Left cardiac atrium (tissue), 4 donors: ENCODE measurements at regions of chr11 and their contacts with region 1.

Region 1: GRCh38 chr11:2885676-2886081 is at the start of gene CDKN1C:
- DNase-seq: peak; percentile 86
- ATAC-seq: peak; percentile 82 to 85
- total RNA-seq, gene CDKN1C: 23.3 to 44.2 TPM

Region 2: DNA sequence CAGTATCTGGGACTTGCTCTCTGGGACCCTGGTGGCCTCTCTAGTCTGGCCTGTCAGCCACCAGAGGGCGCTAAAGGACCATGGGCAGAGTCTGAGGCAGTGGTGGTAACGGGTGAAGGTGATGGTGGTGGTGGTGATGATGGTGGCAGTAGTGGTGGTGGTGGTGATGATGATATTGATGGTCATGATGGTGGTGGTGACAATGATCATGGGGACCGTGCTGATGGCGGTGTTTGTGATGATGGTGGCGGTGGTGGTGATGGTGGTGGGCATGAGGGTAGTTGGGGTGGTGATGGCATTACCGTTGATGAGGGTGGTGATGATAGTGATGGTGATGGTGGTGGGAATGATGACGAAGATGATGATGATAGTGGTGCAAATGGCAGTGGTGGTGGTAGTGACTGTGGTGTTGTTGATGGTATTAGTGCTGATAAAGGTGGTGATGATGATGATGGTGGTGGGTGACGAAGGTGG is 457.3 kb before region 1 on chr11:
- intact Hi-C with region 1: loop called (anchors 2 kb)
- DNase-seq: peak; percentile 76
- ATAC-seq: peak; percentile 77 to 90

Region 3: GRCh38 chr11:2532704-2533586 is 352.7 kb before region 1 on chr11:
- intact Hi-C with region 1: loop called (anchors 1 to 2 kb)
- DNase-seq: peak; percentile 92
- ATAC-seq: peak; percentile 88 to 89

Region 4: DNA sequence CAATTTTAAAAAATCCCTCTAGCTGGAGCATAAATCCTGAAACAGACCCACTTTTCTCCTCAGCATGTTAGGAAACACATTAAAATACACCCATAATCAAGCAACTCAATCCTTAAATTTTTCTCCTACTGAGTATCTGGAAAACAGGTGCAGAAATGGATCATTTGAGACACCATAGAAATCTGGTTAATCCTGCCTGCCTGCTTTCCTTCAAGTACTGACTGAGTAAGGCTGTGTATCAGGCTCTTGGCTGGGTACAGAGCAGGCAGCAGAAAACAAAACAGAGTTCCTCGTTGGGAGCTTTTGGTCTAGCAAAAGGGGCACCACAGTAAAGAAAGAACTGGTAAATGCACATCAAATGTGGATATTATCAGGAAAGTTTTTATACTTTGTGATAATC is 187.8 kb before region 1 on chr11:
- intact Hi-C with region 1: loop called in 1 of 2 experiments (anchors 2 kb)
- DNase-seq: peak; percentile 3
- ATAC-seq: no peak

Region 5: GRCh38 chr11:2750682-2751387 is 134.8 kb before region 1 on chr11:
- intact Hi-C with region 1: no loop called
- DNase-seq: no peak
- ATAC-seq: no peak

Region 6: GRCh38 chr11:2780259-2781058 is 105.2 kb before region 1 on chr11:
- intact Hi-C with region 1: loop called in 1 of 2 experiments (anchors 10 kb)
- DNase-seq: peak; percentile 37
- ATAC-seq: no peak

Region 7: GRCh38 chr11:2834503-2835273 is 51.0 kb before region 1 on chr11:
- intact Hi-C with region 1: loop called in 1 of 2 experiments (anchors 5 kb)
- DNase-seq: no peak
- ATAC-seq: no peak

Region 8: DNA sequence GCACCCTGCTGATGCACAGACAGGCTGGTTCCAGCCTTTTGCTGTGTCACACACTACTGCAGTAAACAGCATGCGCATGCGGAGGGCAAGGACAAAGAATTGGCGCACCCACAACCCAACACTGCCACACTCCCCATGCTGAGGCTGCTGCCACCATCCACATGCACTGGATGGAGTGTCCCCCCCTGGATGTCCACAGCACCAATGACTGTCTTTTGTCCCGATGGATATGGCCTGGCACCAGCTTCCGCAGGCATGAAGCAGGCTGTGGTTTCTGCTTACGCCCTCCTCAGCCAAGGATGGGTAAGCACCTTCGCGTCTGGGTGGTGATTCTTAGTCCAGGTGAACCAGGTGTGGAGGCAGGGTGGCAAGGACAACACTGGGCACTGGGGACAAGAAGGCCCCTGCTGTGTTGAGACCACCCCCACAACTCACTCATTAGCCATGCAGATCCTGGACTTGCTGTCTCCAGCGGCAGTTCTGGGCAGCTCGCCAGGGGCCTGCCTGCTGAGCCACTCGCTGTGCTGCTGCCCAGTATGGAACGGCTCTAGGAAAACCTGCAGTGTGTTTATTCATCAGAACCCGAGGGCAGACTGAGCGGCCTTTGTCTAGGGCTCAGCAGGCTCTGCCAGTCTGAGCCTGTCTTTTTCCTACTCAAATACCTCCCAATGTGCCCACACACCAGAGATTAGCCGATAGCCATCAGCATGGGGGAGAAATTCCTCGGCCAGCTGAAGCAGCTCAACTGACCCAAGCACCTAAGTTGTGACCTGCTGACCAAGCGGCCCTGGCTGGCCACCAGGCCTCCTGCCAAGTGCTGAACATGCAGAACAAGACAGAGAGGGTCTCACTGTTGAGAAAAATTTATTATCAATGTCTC is 114.6 kb after region 1 on chr11:
- intact Hi-C with region 1: no loop called
- DNase-seq: peak; percentile 76
- ATAC-seq: peak; percentile 73 to 74

Region 9: DNA sequence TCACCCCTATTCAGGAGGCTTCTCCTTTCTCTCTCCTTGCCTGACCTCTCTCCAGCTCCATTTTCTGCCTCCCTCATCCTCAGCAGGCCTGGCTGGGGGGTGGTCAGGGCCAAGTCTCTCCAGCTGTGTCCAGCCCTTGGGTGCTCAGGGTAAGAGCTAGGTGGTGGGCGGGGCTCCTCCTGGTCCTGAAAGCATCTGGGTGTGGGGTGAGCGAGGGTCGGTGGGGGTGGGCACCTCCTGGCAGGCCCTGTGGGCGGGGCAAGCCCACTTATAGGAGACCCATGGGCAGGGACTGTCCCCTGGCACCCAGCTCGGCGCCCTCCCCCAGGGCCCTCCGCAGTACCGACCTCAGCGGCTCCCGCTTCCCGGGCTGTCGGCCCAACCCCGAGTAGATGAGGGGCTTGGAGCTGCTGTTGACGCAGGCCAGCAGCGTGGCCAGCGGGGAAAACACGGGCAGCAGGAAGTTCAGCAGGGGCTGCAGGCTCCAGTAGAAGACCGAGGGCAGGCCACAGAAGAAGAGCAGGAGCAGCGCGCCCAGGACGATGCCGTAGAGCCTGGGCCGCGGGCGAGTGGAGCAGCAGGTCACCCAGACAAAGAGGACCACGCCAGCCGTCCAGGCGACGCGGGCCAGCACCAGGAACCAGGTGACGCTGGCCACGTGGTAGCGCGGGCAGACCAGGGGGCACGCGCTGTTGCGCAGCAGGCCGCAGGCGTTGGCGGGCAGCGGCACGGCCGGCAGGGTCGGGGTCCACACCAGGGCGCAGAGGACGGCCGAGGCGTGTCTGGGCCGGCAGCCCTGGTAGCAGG is 332.2 kb after region 1 on chr11:
- intact Hi-C with region 1: no loop called
- DNase-seq: peak; percentile 17
- ATAC-seq: peak in 1 of 2 donors; percentile 9